B cell (primary cell): ENCODE measurements at regions of chr12 and their contacts with region 1.

Region 1: DNA sequence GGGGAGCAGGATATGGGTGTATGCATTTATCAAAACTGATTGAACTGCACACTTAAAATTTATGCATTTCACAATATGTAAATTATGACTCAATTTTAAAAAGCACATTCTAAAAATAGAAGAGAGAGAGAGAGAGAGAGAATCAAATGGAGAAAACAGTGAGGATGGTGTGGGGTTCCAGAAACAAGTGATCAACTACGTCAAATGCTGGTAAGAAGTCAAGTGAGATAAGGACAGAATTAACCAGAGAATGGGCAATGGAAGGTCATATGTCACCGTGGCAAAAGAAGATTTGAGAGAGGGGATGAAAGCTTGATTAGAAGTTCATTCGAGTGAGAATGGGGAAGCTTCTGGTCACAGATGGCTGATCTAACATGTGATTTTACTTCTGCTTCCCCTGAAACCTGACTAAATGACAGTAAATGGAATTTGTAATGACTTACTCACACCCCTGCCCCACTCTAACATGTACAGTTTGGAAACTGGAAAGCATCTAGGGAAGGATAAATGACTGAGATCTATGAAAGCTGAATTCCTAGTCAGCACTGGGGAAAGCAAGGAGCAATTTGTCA is 276.5 kb upstream of the AMIGO2 start:
- DNase-seq: peak; percentile 93
- ATAC-seq: peak; percentile 77
- H3K4me3 ChIP-seq: peak overlapping the region in 1 of 5 experiments; percentile 31
- H3K4me3 Mint-ChIP-seq: peak overlapping the region; percentile 74
- H3K27ac ChIP-seq: peak overlapping the region; percentile 91 to 95
- H3K27ac Mint-ChIP-seq: peak overlapping the region; percentile 98
- H3K4me1 ChIP-seq: peaks cover 71 to 80% of the 10 kb centered on the region in 2 donors
- H3K4me1 Mint-ChIP-seq: peaks cover 78% of the 10 kb centered on the region
- H3K27me3 ChIP-seq: no peaks in the 10 kb centered on the region
- H3K27me3 Mint-ChIP-seq: no peaks in the 10 kb centered on the region
- CTCF ChIP-seq: no peak

Region 2: GRCh38 chr12:46217541-46218321 is 1138.5 kb before region 1 on chr12:
- CTCF ChIA-PET with region 1: no interaction called
- POLR2A ChIA-PET with region 1: no interaction called
- intact Hi-C with region 1: loop called (anchors 5 kb)
- DNase-seq: peak; percentile 87
- ATAC-seq: peak; percentile 70
- H3K4me3 ChIP-seq: peak overlapping the region in 4 of 5 experiments; percentile 16 to 59 (median 32)
- H3K4me3 Mint-ChIP-seq: peak overlapping the region; percentile 69
- H3K27ac ChIP-seq: peak overlapping the region; percentile 83 to 96
- H3K27ac Mint-ChIP-seq: peak overlapping the region; percentile 86
- H3K4me1 ChIP-seq: peaks cover 94 to 97% of the 10 kb centered on the region in 2 donors
- H3K4me1 Mint-ChIP-seq: peaks cover 94% of the 10 kb centered on the region
- H3K27me3 ChIP-seq: no peaks in the 10 kb centered on the region
- H3K27me3 Mint-ChIP-seq: no peaks in the 10 kb centered on the region
- CTCF ChIP-seq: no peak

Region 3: GRCh38 chr12:47079468-47079980 is 276.7 kb before region 1 on chr12 and contains the starts of genes AMIGO2 and PCED1B:
- CTCF ChIA-PET with region 1: interaction called, 3 read pairs
- POLR2A ChIA-PET with region 1: no interaction called
- intact Hi-C with region 1: loop called (anchors 1 kb)
- DNase-seq: peak; percentile 68
- ATAC-seq: peak; percentile 50
- H3K4me3 ChIP-seq: peak within 1 kb of the TSS; percentile 74 to 92 (median 83)
- H3K4me3 Mint-ChIP-seq: peak within 1 kb of the TSS; percentile 98
- H3K27ac ChIP-seq: peak within 1 kb of the TSS; percentile 53 to 78
- H3K27ac Mint-ChIP-seq: peak within 1 kb of the TSS; percentile 91
- H3K4me1 ChIP-seq: peaks cover 17 to 29% of the 10 kb centered on the region in 2 donors
- H3K4me1 Mint-ChIP-seq: peaks cover 59% of the 10 kb centered on the region
- H3K27me3 ChIP-seq: no peaks in the 10 kb centered on the region
- H3K27me3 Mint-ChIP-seq: no peaks in the 10 kb centered on the region
- CTCF ChIP-seq: no peak
- total RNA-seq, gene AMIGO2: 9.2 and 10.4 TPM in 2 replicates
- total RNA-seq, gene PCED1B: 45.8 and 48.0 TPM in 2 replicates

Region 4: GRCh38 chr12:47312808-47313426 is 43.3 kb before region 1 on chr12:
- CTCF ChIA-PET with region 1: interaction called, 7 read pairs
- POLR2A ChIA-PET with region 1: interaction called, 5 read pairs
- intact Hi-C with region 1: loop called (anchors 1 kb)
- DNase-seq: peak; percentile 78
- ATAC-seq: peak; percentile 79
- H3K4me3 ChIP-seq: peak overlapping the region in 1 of 5 experiments; percentile 0
- H3K4me3 Mint-ChIP-seq: peak overlapping the region; percentile 17
- H3K27ac ChIP-seq: peak overlapping the region; percentile 40 to 61
- H3K27ac Mint-ChIP-seq: peak overlapping the region; percentile 68
- H3K4me1 ChIP-seq: peaks cover 51 to 65% of the 10 kb centered on the region in 2 donors
- H3K4me1 Mint-ChIP-seq: peaks cover 63% of the 10 kb centered on the region
- H3K27me3 ChIP-seq: no peaks in the 10 kb centered on the region
- H3K27me3 Mint-ChIP-seq: no peaks in the 10 kb centered on the region
- CTCF ChIP-seq: no peak

Region 5: DNA sequence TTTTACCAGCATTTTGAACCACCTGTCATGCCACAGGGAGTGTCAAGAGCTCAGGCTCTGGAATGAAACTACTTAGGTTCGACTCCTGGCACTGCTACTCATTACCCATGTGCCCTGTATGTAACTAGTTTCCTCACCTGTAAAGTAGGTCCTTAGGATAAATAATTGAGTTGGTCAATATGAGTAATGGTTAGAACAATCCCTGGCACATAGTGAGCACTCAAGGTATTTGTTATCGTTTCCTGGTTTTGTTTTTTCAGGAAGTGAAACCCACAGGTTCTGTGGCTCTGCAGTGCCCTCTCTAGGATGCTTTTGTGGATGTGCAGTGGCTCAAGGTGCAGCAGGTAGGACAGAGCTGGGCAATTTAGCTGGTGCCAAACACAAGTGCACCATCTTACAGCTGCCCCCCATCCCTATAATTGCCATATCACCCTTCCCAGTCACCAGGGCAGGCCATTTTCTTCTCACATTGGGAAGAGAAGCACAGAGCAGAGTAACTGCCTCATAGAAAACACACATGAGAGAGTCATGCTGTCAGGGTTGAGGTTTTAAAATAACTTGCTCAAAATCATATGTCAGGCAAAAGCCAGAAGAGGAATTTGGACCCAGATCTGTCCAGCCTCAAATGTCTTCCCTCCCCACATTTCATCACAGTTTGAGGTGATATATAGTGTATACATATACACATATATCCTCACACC is 52.1 kb after region 1 on chr12:
- CTCF ChIA-PET with region 1: interaction called, 12 read pairs
- POLR2A ChIA-PET with region 1: no interaction called
- intact Hi-C with region 1: no loop called
- DNase-seq: peak; percentile 87
- ATAC-seq: peak; percentile 98
- H3K4me3 ChIP-seq: no peak overlapping the region
- H3K4me3 Mint-ChIP-seq: no peak overlapping the region
- H3K27ac ChIP-seq: peak overlapping the region; percentile 41 to 55
- H3K27ac Mint-ChIP-seq: peak overlapping the region; percentile 73
- H3K4me1 ChIP-seq: peaks cover 18 to 19% of the 10 kb centered on the region in 2 donors
- H3K4me1 Mint-ChIP-seq: peaks cover 21% of the 10 kb centered on the region
- H3K27me3 ChIP-seq: no peaks in the 10 kb centered on the region
- H3K27me3 Mint-ChIP-seq: no peaks in the 10 kb centered on the region
- CTCF ChIP-seq: peak; percentile 83

Region 6: DNA sequence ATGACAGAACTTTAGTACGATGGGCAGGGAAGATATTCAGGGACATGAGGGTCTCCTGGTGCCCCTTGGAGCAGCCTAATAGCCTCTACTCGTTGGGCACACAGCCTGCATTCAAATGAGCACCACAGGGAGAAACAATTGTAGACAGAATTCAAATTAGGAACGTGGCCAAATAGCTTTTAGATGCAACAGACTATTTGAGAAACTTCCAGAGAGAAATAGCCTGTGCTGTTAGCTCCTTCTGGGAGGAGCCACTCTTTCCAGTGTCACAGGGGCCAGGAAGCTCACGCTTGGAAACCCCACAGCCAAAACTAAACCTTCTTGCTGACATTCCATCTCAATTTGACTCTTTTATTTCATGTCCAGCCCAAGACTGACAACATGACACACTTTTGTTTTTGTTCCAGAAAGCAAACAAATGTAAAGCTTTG is 235.2 kb after region 1 on chr12:
- CTCF ChIA-PET with region 1: no interaction called
- POLR2A ChIA-PET with region 1: no interaction called
- intact Hi-C with region 1: no loop called
- DNase-seq: no peak
- ATAC-seq: no peak
- H3K4me3 ChIP-seq: no peak overlapping the region
- H3K4me3 Mint-ChIP-seq: no peak overlapping the region
- H3K27ac ChIP-seq: no peak overlapping the region
- H3K27ac Mint-ChIP-seq: no peak overlapping the region
- H3K4me1 ChIP-seq: no peaks in the 10 kb centered on the region
- H3K4me1 Mint-ChIP-seq: peaks cover 12% of the 10 kb centered on the region
- H3K27me3 ChIP-seq: no peaks in the 10 kb centered on the region
- H3K27me3 Mint-ChIP-seq: peaks cover 4% of the 10 kb centered on the region
- CTCF ChIP-seq: no peak